Transverse colon (tissue), 4 donors: ENCODE measurements at regions of chr1 and their contacts with region 1.

Region 1: DNA sequence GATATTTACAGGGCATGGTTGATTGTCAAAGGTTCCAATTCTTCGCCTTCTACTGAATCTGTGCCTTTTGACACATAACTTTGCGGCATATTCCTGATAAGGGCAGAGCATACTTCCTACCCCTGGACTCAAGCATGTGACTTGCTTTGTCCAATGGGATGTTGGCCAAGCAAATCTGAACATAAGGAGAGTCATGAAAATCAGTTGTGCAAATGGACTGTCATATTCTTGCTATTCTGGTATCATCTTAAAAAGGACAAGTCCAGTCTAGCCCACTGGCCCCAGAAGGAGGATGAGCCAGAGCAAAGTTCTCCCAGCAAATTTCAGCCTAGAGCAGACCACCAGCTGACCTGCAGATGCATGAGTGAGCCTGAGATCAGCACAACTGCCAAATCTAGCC is 41.0 kb upstream of the MUTYH start:
- DNase-seq: no peak
- H3K4me3 ChIP-seq: no peak overlapping the region
- H3K27ac ChIP-seq: no peak overlapping the region
- H3K4me1 ChIP-seq: no peaks in the 10 kb centered on the region
- H3K27me3 ChIP-seq: no peaks in the 10 kb centered on the region
- CTCF ChIP-seq: no peak
- EP300 ChIP-seq: no peak
- POLR2A ChIP-seq: no peak

Region 2: DNA sequence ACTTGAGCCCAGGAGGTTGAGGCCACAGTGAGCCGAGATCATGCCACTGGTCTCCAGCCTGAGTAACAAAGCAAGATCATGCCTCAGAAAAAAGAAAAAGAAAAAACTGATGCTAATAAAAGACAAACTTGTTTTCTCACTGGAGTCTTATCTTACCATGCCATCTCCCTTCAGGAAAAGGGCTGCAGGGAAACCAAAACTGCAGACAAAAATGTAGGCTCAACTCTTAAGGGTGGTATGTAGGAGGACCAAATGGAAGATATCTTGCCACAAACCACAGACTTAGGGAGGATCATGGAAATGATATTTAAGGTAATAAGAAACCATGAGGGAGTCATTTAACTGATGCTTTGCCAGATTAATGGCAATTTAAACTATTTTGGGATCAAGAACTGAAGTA is 336.3 kb before region 1 on chr1:
- in situ Hi-C with region 1: no loop called
- intact Hi-C with region 1: loop called (anchors 5 kb)
- DNase-seq: no peak
- H3K4me3 ChIP-seq: no peak overlapping the region
- H3K27ac ChIP-seq: no peak overlapping the region
- H3K4me1 ChIP-seq: peaks cover 0 to 6% (median 0%) of the 10 kb centered on the region in 4 donors
- H3K27me3 ChIP-seq: no peaks in the 10 kb centered on the region
- CTCF ChIP-seq: no peak
- EP300 ChIP-seq: no peak
- POLR2A ChIP-seq: no peak

Region 3: GRCh38 chr1:45116340-45116739 is 264.9 kb before region 1 on chr1:
- in situ Hi-C with region 1: no loop called
- intact Hi-C with region 1: no loop called
- DNase-seq: no peak
- H3K4me3 ChIP-seq: no peak overlapping the region
- H3K27ac ChIP-seq: no peak overlapping the region
- H3K4me1 ChIP-seq: peaks cover 0 to 4% (median 0%) of the 10 kb centered on the region in 4 donors
- H3K27me3 ChIP-seq: no peaks in the 10 kb centered on the region
- CTCF ChIP-seq: no peak
- EP300 ChIP-seq: no peak
- POLR2A ChIP-seq: no peak

Region 4: DNA sequence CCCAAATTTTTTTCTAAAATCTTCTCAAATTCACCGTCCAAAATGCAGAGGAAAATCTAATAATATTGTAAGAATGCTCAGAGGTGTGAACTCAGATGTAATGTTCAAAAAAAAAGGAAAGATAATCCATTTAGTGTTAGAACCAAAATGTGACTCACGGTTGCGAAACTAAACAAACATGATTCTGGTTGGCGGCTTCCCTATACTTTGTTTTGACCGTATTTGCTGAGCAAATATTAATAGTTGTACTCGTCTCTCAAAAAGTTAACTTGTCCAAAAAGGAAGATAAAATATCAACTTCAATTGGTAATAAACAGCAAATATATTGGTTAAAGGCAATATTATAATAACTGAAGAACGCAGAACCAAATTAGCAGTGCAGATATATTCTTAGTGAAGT is 209.2 kb before region 1 on chr1:
- in situ Hi-C with region 1: no loop called
- intact Hi-C with region 1: no loop called
- DNase-seq: no peak
- H3K4me3 ChIP-seq: no peak overlapping the region
- H3K27ac ChIP-seq: no peak overlapping the region
- H3K4me1 ChIP-seq: peaks cover 0 to 18% (median 3%) of the 10 kb centered on the region in 4 donors
- H3K27me3 ChIP-seq: no peaks in the 10 kb centered on the region
- CTCF ChIP-seq: no peak
- EP300 ChIP-seq: no peak
- POLR2A ChIP-seq: no peak

Region 5: DNA sequence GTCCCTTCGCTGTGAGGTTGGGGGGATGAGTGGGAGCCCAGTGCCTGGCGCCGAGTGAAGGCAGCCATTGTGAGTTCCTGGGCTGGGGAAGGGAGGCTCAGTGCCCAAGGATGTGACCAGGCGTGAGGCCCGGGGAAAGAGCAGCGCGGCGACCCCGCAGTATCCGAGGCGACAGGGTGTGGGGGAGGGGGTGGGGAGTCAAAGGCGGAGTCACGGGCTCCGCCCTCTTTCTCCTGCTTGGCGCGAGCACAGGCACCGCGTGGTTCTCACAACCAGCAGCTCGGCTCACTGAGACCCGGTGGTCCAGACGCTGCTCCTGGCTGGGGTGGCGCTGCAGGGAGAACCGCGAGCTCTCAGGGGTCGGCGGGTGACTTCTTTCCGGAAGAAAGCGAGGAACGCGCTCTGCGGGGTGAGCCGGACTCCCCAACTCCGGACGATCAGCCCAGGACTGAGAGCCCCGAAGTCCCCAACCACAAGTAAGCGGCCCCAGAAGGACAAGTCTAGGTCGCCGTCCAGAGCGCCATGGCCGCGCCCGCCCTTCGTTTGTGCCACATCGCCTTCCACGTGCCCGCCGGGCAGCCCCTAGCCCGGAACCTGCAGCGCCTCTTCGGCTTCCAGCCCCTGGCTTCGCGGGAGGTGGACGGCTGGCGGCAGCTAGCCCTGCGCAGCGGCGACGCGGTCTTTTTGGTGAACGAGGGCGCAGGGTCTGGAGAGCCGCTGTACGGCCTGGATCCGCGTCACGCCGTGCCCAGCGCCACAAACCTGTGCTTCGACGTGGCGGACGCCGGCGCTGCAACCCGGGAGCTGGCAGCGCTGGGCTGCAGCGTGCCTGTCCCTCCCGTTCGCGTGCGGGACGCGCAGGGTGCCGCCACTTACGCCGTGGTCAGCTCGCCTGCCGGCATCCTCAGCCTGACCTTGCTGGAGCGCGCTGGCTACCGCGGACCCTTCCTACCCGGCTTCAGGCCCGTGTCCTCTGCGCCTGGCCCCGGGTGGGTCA is 54.3 kb before region 1 on chr1 and contains the start of gene HPDL:
- in situ Hi-C with region 1: no loop called
- intact Hi-C with region 1: no loop called
- DNase-seq: peak; percentile 80
- H3K4me3 ChIP-seq: peak within 1 kb of the TSS; percentile 23 to 53 (median 36)
- H3K27ac ChIP-seq: peak within 1 kb of the TSS; percentile 2 to 55 (median 14)
- H3K4me1 ChIP-seq: peaks cover 10 to 24% (median 14%) of the 10 kb centered on the region in 4 donors
- H3K27me3 ChIP-seq: no peaks in the 10 kb centered on the region
- CTCF ChIP-seq: no peak
- EP300 ChIP-seq: no peak
- POLR2A ChIP-seq: peak; percentile 22
- total RNA-seq, gene HPDL: 2.6 to 7.8 (median 4.3) TPM

Region 6: GRCh38 chr1:45465277-45465676 is 84.0 kb after region 1 on chr1:
- in situ Hi-C with region 1: no loop called
- intact Hi-C with region 1: loop called (anchors 5 kb)
- DNase-seq: no peak
- H3K4me3 ChIP-seq: no peak overlapping the region
- H3K27ac ChIP-seq: no peak overlapping the region
- H3K4me1 ChIP-seq: no peaks in the 10 kb centered on the region
- H3K27me3 ChIP-seq: no peaks in the 10 kb centered on the region
- CTCF ChIP-seq: no peak
- EP300 ChIP-seq: no peak
- POLR2A ChIP-seq: no peak